Sigmoid colon (tissue), 7 donors: ENCODE measurements at regions of chr20 and their contacts with region 1.

Region 1: GRCh38 chr20:23967253-23967979 is 21.2 kb downstream of the GGTLC1 start:
- DNase-seq: no peak
- H3K4me3 ChIP-seq: no peak overlapping the region
- H3K27ac ChIP-seq: no peak overlapping the region
- H3K4me1 ChIP-seq: no peaks in the 10 kb centered on the region
- H3K27me3 ChIP-seq: no peaks in the 10 kb centered on the region
- CTCF ChIP-seq: no peak
- EP300 ChIP-seq: no peak
- POLR2A ChIP-seq: no peak

Region 2: GRCh38 chr20:23909390-23909789 is 58.0 kb before region 1 on chr20:
- intact Hi-C with region 1: loop called (anchors 10 kb)
- DNase-seq: no peak
- H3K4me3 ChIP-seq: no peak overlapping the region
- H3K27ac ChIP-seq: no peak overlapping the region
- H3K4me1 ChIP-seq: no peaks in the 10 kb centered on the region
- H3K27me3 ChIP-seq: no peaks in the 10 kb centered on the region
- CTCF ChIP-seq: no peak
- EP300 ChIP-seq: no peak
- POLR2A ChIP-seq: no peak

Region 3: GRCh38 chr20:24100385-24101011 is 133.1 kb after region 1 on chr20:
- intact Hi-C with region 1: no loop called
- DNase-seq: no peak
- H3K4me3 ChIP-seq: no peak overlapping the region
- H3K27ac ChIP-seq: no peak overlapping the region
- H3K4me1 ChIP-seq: no peaks in the 10 kb centered on the region
- H3K27me3 ChIP-seq: no peaks in the 10 kb centered on the region
- CTCF ChIP-seq: peak in 1 of 4 experiments; percentile 45
- EP300 ChIP-seq: no peak
- POLR2A ChIP-seq: no peak